ENCODE measurements at regions of chr4 and their contacts with region 1.

Region 1: DNA sequence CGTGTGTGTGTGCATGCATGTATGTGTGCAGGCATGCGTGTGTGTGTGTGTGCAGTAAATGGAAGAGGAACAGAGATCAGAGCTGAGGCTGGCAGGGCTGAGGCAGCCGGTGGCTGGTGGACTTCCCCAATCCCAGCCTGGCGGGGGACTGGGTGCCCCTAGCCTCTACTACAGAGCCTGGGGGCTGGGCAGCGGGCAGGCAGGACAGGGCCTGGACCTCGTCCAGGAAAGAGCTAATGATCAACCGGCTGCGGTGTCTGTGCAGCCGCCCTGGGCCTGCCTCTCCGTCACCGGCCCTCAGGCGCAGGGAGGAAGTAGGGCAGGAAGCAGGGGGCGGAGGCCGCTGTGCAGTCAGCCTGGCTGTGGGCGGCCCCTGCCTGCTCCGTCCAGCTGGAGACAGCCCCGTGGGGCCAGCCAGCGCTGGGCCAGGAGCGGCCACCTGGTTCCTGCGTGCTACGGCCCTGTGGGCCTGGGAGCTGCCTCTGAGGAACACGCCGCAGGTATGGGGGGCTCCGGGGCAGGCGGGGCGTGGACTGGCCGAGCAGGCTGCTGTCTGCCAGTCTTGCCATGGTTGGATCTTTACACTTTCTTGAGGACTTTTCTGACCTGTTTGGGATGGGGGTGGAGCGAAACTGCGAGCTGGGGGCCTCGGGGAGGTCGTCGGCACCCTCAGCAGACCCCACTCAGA is at the start of gene SH3TC1:
- DNase-seq: peak; percentile 83
- ATAC-seq: peak; percentile 80
- H3K4me3 Mint-ChIP-seq: peak within 1 kb of the TSS; percentile 89
- H3K27ac Mint-ChIP-seq: peak within 1 kb of the TSS; percentile 94
- H3K4me1 Mint-ChIP-seq: peaks cover 38% of the 10 kb centered on the region
- H3K27me3 Mint-ChIP-seq: no peaks in the 10 kb centered on the region
- total RNA-seq, gene SH3TC1: 11.1 to 18.3 TPM

Region 2: GRCh38 chr4:8228319-8229250 is 29.5 kb after region 1 on chr4:
- CTCF ChIA-PET with region 1: interaction called, 3 read pairs
- POLR2A ChIA-PET with region 1: no interaction called
- intact Hi-C with region 1: loop called in 1 of 2 experiments (anchors 1 kb)
- DNase-seq: peak; percentile 92
- ATAC-seq: peak; percentile 90
- H3K4me3 Mint-ChIP-seq: peak overlapping the region; percentile 7
- H3K27ac Mint-ChIP-seq: peak overlapping the region; percentile 48
- H3K4me1 Mint-ChIP-seq: peaks cover 31% of the 10 kb centered on the region
- H3K27me3 Mint-ChIP-seq: no peaks in the 10 kb centered on the region

Region 3: DNA sequence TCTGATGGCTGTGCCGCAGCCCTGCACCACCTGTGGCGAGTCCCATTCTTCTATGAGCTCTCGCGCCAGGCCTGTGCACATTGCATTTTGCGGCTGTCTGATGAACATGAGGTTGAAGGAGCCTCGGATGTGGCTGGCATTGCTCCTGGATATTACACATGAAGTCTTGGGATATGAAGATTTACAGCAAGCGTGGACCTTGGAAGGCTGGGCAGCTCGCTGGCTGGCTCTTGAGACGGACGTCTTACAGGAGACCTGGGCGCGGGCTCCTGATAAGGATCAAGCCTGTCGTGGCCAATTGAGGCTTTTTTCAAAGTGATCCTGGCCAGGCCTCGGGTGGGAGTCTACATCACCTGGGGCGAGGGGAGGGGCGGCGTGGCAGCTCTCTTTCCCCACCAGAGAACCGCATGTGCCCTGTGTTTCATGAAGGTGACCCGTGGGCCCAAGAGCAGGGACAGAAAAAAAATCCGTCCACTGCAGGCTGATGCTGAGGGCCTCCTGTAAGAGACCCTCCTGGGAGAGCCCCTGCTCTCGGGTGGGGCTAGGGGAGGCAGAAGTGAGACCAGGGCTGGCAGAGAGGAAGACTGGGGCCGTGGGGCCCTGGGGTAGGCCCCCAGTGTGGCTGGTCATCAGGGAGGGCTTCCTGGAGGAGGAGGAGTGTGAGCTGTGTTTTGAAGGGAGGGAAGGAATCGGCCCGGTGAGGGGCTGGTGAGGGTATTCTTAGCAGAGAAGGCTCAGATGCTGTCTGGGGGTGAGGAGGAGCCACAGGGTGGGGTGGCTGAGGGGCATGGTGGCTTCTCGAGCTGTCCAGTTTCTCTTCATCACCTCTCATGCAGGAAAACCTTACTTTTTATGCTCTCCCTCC is 417.1 kb after region 1 on chr4:
- CTCF ChIA-PET with region 1: no interaction called
- POLR2A ChIA-PET with region 1: no interaction called
- intact Hi-C with region 1: no loop called
- DNase-seq: no peak
- ATAC-seq: no peak
- H3K4me3 Mint-ChIP-seq: no peak overlapping the region
- H3K27ac Mint-ChIP-seq: no peak overlapping the region
- H3K4me1 Mint-ChIP-seq: no peaks in the 10 kb centered on the region
- H3K27me3 Mint-ChIP-seq: no peaks in the 10 kb centered on the region